Activated T-helper 2 cell treated with anti-CD3 and anti-CD28 coated beads, Interferon-gamma antibody, Interleukin-2, Interleukin-4, amounts not matched to agents 10 μg/mL and 5 μg/mL and 100 μg/mL, durations not matched to agents 14 hours and 24 hours and 36 hours (primary cell): ENCODE measurements at regions of chr22 and their contacts with region 1.

Region 1: DNA sequence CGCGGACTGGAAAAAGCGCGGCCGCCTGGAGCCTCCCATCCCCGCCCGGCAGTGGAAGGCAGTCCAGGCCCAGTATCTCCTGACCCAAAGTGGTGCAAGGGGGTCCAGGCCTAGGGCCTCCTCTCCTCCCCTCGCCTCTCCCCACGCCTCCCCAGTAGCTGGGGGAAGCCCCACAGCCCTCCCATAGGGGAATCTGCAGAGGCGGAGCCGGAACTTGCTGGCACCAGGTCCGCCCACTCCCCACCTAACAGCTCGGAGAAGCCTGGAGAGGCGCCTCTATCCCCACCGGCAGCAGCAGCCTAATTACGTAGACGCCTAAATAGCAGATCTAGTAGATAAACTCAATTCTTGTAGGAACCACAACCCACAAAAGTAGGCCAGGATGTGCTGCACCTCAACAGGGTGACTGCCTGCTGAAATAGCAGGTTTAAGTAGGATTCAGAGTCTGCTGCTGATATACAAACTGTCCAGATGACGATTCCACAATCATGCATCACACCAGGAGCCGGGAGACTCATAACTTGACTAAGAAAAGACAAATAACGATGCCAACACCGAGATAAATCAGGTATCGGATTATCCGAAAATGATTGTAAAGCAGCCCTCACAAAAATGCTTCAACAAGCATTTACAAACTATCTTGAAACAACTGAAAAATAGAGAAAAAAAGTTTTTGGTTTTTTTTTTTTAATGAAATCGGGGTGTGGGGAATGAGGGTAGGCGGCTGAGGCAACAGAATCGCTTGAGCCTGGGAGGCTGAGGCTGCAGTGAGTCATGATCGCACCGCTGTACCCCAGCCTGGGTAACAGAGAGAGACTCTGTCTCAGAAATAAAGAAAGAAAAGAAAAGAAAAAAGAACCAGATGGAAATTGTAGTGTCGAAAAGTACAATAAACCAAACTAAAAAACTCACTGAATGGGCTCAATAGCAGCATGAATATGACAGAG is 11.4 kb upstream of the BRD1 start:
- DNase-seq: peak; percentile 86
- H3K4me3 Mint-ChIP-seq: peak overlapping the region; percentile 70
- H3K27ac Mint-ChIP-seq: peak overlapping the region; percentile 93
- H3K4me1 Mint-ChIP-seq: peaks cover 29% of the 10 kb centered on the region
- H3K27me3 Mint-ChIP-seq: peaks cover 4% of the 10 kb centered on the region

Region 2: GRCh38 chr22:49788504-49788903 is 50.5 kb before region 1 on chr22:
- intact Hi-C with region 1: no loop called
- DNase-seq: no peak
- H3K4me3 Mint-ChIP-seq: no peak overlapping the region
- H3K27ac Mint-ChIP-seq: peak overlapping the region; percentile 11
- H3K4me1 Mint-ChIP-seq: peaks cover 35% of the 10 kb centered on the region
- H3K27me3 Mint-ChIP-seq: no peaks in the 10 kb centered on the region

Region 3: GRCh38 chr22:49827853-49828598 is 11.0 kb before region 1 on chr22 and contains the start of gene BRD1:
- intact Hi-C with region 1: loop called (anchors 1 kb)
- DNase-seq: peak; percentile 46
- H3K4me3 Mint-ChIP-seq: peak within 1 kb of the TSS; percentile 91
- H3K27ac Mint-ChIP-seq: peak within 1 kb of the TSS; percentile 89
- H3K4me1 Mint-ChIP-seq: peaks cover 40% of the 10 kb centered on the region
- H3K27me3 Mint-ChIP-seq: no peaks in the 10 kb centered on the region
- total RNA-seq, gene BRD1: 41.3 and 46.2 TPM in 2 replicates

Region 4: DNA sequence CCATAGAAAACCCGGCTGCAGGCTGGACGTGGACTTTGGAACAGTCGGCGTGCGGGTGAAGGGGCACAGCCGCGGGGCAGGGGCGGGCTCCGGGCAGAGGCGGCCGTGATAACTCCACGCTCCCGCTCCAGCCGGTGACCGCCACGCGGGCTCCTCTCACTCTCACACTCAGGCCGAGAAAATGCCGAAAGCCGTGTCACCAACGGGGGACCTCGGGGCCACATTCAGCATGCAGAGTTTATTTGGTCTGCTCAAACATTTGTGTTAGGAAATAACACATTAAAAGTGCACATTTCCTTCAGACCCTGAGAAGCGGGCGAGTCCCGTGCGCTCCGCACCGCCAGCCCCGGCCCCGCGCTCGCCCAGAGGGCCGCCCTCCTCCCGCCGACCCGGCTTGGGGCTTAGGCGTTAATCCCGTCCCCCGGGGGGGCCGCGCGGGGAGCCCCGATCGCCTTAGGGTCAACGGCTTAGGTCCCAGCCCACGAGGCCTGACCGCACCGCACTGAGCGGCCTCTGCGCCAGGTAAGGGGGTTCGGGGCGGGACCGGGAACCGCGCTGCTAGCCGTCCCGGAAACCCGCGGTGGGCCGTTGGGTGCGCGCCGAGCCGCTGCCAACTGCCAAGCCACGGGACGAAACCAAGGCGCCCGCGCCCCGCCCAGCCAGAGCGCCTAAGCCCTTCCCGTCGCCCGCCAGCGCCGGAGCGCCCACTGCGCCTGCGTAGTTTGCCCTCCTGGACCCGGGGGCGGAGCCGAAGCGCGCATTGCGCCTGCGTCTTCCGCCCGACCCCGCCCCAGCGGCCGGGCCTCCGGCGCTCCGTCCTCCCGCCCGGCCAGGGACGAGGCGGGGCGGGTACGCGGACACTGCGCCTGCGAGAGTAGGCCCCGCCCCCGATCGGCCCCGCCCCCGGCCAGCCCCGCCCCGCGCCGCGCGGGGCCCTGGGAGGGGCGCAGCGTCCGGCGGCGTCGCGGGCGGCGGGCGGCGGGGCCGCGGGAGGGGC is 14.2 kb after region 1 on chr22 and contains the start of gene ZBED4:
- intact Hi-C with region 1: loop called (anchors 2 kb)
- DNase-seq: peak; percentile 99
- H3K4me3 Mint-ChIP-seq: peak within 1 kb of the TSS; percentile 93
- H3K27ac Mint-ChIP-seq: peak within 1 kb of the TSS; percentile 96
- H3K4me1 Mint-ChIP-seq: peaks cover 40% of the 10 kb centered on the region
- H3K27me3 Mint-ChIP-seq: peaks cover 5% of the 10 kb centered on the region
- total RNA-seq, gene ZBED4: 25.2 and 25.6 TPM in 2 replicates

Region 5: GRCh38 chr22:49867303-49868265 is 28.5 kb after region 1 on chr22:
- intact Hi-C with region 1: loop called (anchors 1 kb)
- DNase-seq: no peak
- H3K4me3 Mint-ChIP-seq: peak overlapping the region; percentile 42
- H3K27ac Mint-ChIP-seq: peak overlapping the region; percentile 91
- H3K4me1 Mint-ChIP-seq: peaks cover 57% of the 10 kb centered on the region
- H3K27me3 Mint-ChIP-seq: no peaks in the 10 kb centered on the region

Region 6: GRCh38 chr22:49970528-49971231 is 131.6 kb after region 1 on chr22:
- intact Hi-C with region 1: loop called (anchors 2 kb)
- DNase-seq: peak; percentile 90
- H3K4me3 Mint-ChIP-seq: peak overlapping the region; percentile 77
- H3K27ac Mint-ChIP-seq: peak overlapping the region; percentile 88
- H3K4me1 Mint-ChIP-seq: peaks cover 19% of the 10 kb centered on the region
- H3K27me3 Mint-ChIP-seq: no peaks in the 10 kb centered on the region

Region 7: DNA sequence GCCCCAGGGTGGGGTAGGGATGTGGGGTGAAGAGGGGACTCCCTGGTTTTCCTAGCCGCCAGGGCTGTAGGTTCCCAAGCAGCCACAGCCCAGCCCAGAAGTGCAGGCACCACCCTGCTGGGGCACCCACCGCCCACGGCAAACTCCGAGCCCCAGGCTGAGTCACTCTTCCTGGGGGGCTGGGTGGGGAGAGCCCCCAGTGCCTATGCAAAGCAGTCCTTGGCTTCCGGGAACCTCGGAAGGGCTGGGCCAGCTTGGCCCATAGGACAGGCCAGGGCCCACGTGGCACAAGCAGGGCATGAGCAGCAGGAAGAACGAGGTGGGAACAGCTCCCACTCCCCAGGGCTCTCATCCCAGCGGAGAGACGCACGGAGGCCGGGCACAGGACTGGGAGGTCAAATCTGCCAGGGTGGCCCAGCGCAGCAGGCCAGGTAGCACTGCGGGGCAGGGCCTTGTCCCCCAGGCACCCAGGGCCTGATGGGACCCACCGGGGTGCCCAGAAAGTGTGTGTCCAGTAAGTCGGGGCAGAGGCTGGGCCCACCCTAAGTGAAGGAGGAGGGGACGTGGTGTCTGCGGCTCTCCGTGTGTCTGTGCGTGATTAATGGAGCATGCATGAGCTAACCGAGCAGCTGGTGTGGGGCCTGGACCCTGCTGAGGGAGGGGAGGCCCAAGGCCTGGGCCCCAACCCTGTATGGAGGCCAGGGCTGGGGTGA is 178.1 kb after region 1 on chr22:
- intact Hi-C with region 1: loop called (anchors 2 kb)
- DNase-seq: no peak
- H3K4me3 Mint-ChIP-seq: no peak overlapping the region
- H3K27ac Mint-ChIP-seq: peak overlapping the region; percentile 52
- H3K4me1 Mint-ChIP-seq: peaks cover 25% of the 10 kb centered on the region
- H3K27me3 Mint-ChIP-seq: peaks cover 3% of the 10 kb centered on the region